IMR-90 (cell line): ENCODE measurements at regions of chr2 and their contacts with region 1.

Region 1: GRCh38 chr2:139514951-139515350 is 734.8 kb upstream of the NXPH2 start:
- DNase-seq: no peak
- ATAC-seq: no peak
- H3K4me3 ChIP-seq: no peak overlapping the region
- H3K27ac ChIP-seq: no peak overlapping the region
- H3K4me1 ChIP-seq: no peaks in the 10 kb centered on the region
- H3K27me3 ChIP-seq: no peaks in the 10 kb centered on the region
- CTCF ChIP-seq: no peak
- POLR2A ChIP-seq: no peak
- RAD21 ChIP-seq: no peak

Region 2: DNA sequence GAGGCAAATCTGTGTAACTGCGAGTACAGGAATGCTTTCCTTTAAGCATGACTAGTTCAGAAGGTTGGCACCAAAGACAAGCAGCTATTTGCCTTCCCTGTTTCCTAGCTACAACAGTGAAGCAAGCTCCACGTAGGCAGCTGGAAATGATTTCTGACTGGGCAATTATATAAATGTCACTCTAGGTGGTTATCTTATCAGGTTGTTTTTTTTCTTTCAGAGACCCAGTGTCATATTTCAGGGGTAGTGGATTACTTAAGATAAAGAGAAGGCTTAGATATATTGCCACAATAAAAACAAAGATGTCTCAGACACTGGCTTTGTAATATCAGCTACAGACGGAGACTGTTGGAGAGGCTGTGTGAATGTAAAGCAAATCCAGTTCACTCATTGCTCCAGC is 14.1 kb after region 1 on chr2:
- CTCF ChIA-PET with region 1: no interaction called
- POLR2A ChIA-PET with region 1: interaction called, 10 read pairs
- dilution Hi-C with region 1: no loop called
- in situ Hi-C with region 1: no loop called
- intact Hi-C with region 1: no loop called
- DNase-seq: no peak
- ATAC-seq: no peak
- H3K4me3 ChIP-seq: no peak overlapping the region
- H3K27ac ChIP-seq: no peak overlapping the region
- H3K4me1 ChIP-seq: no peaks in the 10 kb centered on the region
- H3K27me3 ChIP-seq: no peaks in the 10 kb centered on the region
- CTCF ChIP-seq: no peak
- POLR2A ChIP-seq: no peak
- RAD21 ChIP-seq: no peak

Region 3: GRCh38 chr2:140454717-140455116 is 939.8 kb after region 1 on chr2:
- CTCF ChIA-PET with region 1: no interaction called
- POLR2A ChIA-PET with region 1: no interaction called
- dilution Hi-C with region 1: no loop called
- in situ Hi-C with region 1: no loop called
- intact Hi-C with region 1: no loop called
- DNase-seq: peak; percentile 76
- ATAC-seq: peak; percentile 87
- H3K4me3 ChIP-seq: no peak overlapping the region
- H3K27ac ChIP-seq: no peak overlapping the region
- H3K4me1 ChIP-seq: no peaks in the 10 kb centered on the region
- H3K27me3 ChIP-seq: no peaks in the 10 kb centered on the region
- CTCF ChIP-seq: no peak
- POLR2A ChIP-seq: no peak
- RAD21 ChIP-seq: no peak